ENCODE measurements at regions of chr18 and their contacts with region 1.

Region 1: GRCh38 chr18:22800551-22800951 is 132.6 kb upstream of the RBBP8 start:
- DNase-seq: no peak
- ATAC-seq: peak; percentile 89

Region 2: DNA sequence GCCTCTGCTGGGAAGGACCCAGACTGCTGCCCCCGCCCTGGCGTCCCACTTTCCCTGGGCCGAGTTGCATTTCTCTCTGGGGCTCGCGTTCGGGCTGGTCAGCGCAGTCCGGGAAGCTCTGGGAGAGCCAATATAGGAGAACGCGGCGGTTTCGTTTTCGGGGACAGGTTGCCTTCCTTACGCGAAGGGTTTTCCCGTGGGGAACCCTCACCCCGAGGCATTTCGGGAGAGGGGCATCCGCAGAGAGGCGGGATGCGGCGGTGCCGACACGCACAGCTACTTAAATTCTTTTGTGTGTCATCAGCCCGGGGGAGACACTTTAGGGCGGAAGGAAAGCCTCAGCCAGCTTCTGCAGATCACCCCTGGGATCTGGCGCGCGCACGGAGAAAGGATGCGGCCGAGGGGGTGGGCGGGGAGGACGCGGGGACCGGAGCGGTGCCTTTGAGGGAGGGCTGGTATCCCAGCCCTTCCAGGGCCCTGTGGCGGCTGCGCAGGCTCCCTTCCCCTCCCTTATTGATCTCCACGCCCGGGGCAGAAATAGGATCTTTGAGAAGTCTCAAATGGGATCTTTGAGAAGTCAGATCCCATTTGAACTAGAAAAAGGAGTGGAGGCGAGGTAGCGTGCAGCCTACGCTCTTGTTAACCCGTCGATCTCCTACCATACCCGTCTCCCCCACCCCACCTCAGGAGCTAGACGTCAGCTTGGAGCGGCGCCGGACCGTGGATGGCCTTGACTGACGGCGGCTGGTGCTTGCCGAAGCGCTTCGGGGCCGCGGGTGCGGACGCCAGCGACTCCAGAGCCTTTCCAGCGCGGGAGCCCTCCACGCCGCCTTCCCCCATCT is 629.9 kb before region 1 on chr18:
- intact Hi-C with region 1: loop called (anchors 10 kb)
- DNase-seq: no peak
- ATAC-seq: peak; percentile 43

Region 3: GRCh38 chr18:22551536-22552151 is 248.9 kb before region 1 on chr18:
- intact Hi-C with region 1: no loop called
- DNase-seq: no peak
- ATAC-seq: peak; percentile 32

Region 4: GRCh38 chr18:22753130-22753831 is 47.3 kb before region 1 on chr18:
- intact Hi-C with region 1: no loop called
- DNase-seq: no peak
- ATAC-seq: no peak

Region 5: GRCh38 chr18:22813648-22814328 is 13.2 kb after region 1 on chr18:
- intact Hi-C with region 1: no loop called
- DNase-seq: no peak
- ATAC-seq: no peak